HEK293 (cell line): ENCODE measurements at regions of chr19 and their contacts with region 1.

Region 1: GRCh38 chr19:36214386-36215275 is at the starts of genes ZNF146 and ZNF565:
- H3K4me3 ChIP-seq: peak within 1 kb of the TSS; percentile 67
- H3K27ac ChIP-seq: peak within 1 kb of the TSS; percentile 93
- H3K4me1 ChIP-seq: peaks cover 7% of the 10 kb centered on the region
- CTCF ChIP-seq: peak; percentile 75; the same call in 1 of the 2 replicates

Region 2: DNA sequence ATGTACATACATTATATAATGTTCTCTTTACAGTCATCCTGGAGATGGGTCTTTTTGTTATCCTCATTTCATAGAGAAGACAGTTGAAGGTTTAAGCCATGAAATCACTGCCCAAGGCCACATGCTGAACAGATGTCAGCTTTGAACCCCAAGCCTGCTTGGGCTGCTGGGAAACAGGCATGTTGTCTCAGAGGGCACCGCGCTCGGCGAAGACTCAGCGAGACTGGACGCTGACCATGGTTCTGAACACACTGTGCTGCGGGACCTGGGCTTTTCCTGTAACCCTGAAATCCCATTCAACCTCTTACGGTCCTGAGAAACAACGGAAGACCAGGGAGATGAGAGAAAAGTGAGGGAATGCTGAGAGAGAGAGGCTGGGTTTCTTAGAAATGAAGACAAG is 251.1 kb before region 1 on chr19:
- CTCF ChIA-PET with region 1: no interaction called
- POLR2A ChIA-PET with region 1: no interaction called
- H3K4me3 ChIP-seq: no peak overlapping the region
- H3K27ac ChIP-seq: no peak overlapping the region
- H3K4me1 ChIP-seq: peaks cover 8% of the 10 kb centered on the region
- CTCF ChIP-seq: no peak

Region 3: GRCh38 chr19:36132489-36132891 is 82.1 kb before region 1 on chr19:
- CTCF ChIA-PET with region 1: interaction called, 12 read pairs
- POLR2A ChIA-PET with region 1: interaction called, 15 read pairs
- H3K4me3 ChIP-seq: no peak overlapping the region
- H3K27ac ChIP-seq: no peak overlapping the region
- H3K4me1 ChIP-seq: peaks cover 12% of the 10 kb centered on the region
- CTCF ChIP-seq: no peak

Region 4: DNA sequence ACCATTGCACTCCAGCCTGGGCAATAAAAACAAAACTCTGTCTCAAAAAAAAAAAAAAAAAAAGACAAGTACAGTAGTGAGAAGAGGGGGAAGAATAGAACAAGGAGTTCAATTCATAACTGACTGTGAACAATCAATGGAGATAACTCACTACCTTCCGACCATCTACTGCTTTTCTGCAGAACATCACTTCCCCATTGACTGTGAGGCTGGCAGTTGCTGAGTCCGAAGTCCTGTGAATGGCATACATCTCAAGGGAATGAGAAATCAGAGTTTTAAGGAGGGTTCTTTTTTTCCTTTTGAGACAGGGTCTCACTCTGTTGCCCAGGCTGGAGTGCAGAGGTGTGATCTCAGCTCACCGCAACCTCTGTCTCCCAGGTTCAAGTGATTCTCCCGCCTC is 11.3 kb before region 1 on chr19:
- CTCF ChIA-PET with region 1: interaction called, 3 read pairs
- POLR2A ChIA-PET with region 1: interaction called, 19 read pairs
- H3K4me3 ChIP-seq: no peak overlapping the region
- H3K27ac ChIP-seq: no peak overlapping the region
- H3K4me1 ChIP-seq: no peaks in the 10 kb centered on the region
- CTCF ChIP-seq: no peak

Region 5: DNA sequence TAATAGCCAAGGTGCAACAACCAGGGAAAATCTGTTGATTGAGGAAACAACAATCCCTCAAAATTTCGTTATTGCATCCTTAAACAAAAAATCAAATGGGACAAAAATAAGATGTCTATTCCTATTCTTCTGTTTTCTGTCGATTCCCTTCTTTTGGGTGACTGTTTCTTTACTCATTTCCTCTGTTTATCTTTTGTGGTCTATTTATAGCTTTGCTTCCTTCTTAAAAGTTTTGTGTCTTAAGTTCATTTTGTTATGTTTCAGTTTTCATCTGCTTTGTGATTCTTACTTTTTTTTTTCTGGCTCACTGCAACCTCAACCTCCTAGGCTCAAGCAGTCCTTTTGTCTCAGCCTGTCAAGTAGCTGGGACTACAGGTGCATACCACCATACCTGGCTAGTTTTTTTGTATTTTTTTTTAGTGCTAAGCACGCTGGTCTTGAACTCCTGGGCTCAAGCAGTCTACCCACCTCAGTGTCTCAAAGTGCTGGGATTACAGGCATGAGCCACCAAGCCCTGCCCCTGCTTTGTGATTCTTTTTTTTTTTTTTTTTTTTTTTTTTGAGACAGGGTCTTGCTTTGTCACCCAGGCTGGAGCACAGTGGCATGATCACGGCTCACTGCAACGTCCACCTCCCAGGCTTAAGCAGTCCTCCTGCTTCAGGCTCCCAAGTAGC is 10.7 kb after region 1 on chr19:
- CTCF ChIA-PET with region 1: no interaction called
- POLR2A ChIA-PET with region 1: interaction called, 18 read pairs
- H3K4me3 ChIP-seq: no peak overlapping the region
- H3K27ac ChIP-seq: no peak overlapping the region
- H3K4me1 ChIP-seq: peaks cover 17% of the 10 kb centered on the region
- CTCF ChIP-seq: no peak

Region 6: GRCh38 chr19:36245210-36246005 is 30.8 kb after region 1 on chr19:
- CTCF ChIA-PET with region 1: interaction called, 5 read pairs
- POLR2A ChIA-PET with region 1: interaction called, 12 read pairs
- H3K4me3 ChIP-seq: peak overlapping the region; percentile 1; the same call in 1 of the 2 replicates
- H3K27ac ChIP-seq: no peak overlapping the region
- H3K4me1 ChIP-seq: no peaks in the 10 kb centered on the region; the same call in 1 of the 2 replicates
- CTCF ChIP-seq: no peak

Region 7: GRCh38 chr19:36449059-36449670 is 234.5 kb after region 1 on chr19:
- CTCF ChIA-PET with region 1: no interaction called
- POLR2A ChIA-PET with region 1: no interaction called
- H3K4me3 ChIP-seq: no peak overlapping the region
- H3K27ac ChIP-seq: no peak overlapping the region
- H3K4me1 ChIP-seq: no peaks in the 10 kb centered on the region
- CTCF ChIP-seq: no peak

Region 8: GRCh38 chr19:36497001-36497400 is 282.4 kb after region 1 on chr19:
- CTCF ChIA-PET with region 1: no interaction called
- POLR2A ChIA-PET with region 1: no interaction called
- H3K4me3 ChIP-seq: no peak overlapping the region
- H3K27ac ChIP-seq: no peak overlapping the region
- H3K4me1 ChIP-seq: no peaks in the 10 kb centered on the region
- CTCF ChIP-seq: no peak

Region 9: DNA sequence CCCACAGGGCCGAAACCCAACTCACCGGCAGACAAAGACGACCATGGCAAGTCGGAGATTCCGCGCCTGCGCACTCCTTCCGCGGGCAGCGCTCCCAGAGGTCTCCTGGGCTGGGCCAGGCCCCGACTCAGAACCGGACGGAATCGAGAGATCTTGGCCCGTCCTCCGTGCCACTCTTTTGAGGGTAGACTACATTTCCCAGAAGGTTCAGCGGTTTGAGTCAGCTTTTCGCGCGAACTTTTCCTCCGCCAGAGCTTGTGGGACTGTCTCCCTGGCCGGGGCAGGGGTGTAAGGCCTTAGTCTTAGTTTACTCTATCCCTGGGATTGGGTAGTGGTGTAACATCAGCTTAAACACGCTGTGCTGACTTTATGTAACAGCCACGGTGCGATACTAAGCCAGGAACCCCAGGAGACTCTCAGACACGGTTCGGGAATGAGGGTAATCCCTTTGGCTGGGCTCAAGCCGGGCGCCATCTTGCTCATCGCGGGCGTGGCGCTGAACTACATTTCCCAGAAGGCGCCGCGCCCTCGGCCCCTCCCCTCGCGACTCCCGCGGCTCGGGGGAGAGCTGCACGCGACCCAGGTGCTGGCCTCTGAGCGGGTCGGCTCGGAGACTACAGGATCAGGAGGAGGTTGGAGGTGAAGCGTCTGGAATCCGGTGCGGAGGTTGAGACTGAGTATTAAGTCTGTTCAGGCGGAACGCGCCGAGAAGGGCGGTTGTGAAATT is 313.7 kb after region 1 on chr19 and contains the start of gene ZNF260:
- CTCF ChIA-PET with region 1: no interaction called
- POLR2A ChIA-PET with region 1: interaction called, 11 read pairs
- H3K4me3 ChIP-seq: peak within 1 kb of the TSS; percentile 91
- H3K27ac ChIP-seq: peak within 1 kb of the TSS; percentile 96
- H3K4me1 ChIP-seq: peaks cover 8% of the 10 kb centered on the region; the same call in 1 of the 2 replicates
- CTCF ChIP-seq: peak; percentile 45; the same call in 1 of the 2 replicates